AG04449 (cell line): ENCODE measurements at regions of chr12 and their contacts with region 1.

Region 1: DNA sequence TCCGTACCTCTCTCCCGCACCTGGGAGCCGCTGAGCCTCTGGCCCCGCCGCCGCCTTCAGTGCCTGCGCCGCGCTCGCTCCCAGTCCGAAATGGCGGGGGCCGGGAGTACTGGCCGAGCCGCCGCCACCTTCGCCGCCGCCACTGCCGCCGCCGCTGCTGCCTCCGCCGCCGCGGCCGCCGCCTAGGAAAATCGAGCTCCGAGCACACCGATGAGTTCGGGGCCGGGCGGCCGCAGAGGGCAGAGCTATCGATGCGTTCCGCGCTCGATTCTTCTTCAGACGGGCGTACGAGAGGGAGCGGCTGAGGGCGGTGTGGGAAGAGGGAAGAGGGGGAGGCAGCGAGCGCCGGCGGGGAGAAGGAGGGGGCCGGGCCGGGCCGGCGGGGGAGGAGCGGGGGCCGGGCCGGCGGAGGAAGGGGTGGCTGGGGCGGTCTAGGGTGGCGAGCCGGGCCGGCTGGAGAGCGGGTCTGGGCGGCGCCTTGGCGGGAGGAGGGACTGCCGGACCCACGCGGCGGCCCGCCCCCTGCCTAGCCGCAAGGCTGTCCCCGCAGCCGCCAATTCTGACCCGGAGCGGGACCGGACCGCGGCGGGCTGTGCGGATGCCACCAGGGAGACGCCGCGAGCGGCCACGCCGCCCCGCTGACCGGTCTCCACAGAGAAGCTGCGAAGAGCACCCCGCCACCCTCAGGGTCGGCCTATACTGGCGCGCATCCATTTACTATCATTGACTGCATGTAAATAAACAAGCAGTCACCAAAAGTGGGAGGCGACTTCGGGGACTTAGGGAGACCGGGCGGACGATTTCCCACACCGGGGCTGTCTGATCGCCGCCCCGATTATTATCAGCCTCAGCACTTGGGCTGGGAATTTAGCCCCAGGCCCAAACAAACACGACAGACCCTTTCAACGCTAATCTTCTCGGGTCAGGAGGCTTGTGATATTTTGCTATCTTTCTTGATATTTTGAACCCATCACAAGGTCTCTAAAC is at the start of gene KRAS:
- DNase-seq: peak; percentile 92
- H3K4me3 ChIP-seq: peak within 1 kb of the TSS; percentile 93
- CTCF ChIP-seq: no peak

Region 2: GRCh38 chr12:25236190-25236589 is 14.8 kb before region 1 on chr12:
- CTCF ChIA-PET with region 1: interaction called, 14 read pairs
- POLR2A ChIA-PET with region 1: interaction called, 4 read pairs
- DNase-seq: no peak
- H3K4me3 ChIP-seq: no peak overlapping the region
- CTCF ChIP-seq: no peak